Endothelial cell of umbilical vein (primary cell): ENCODE measurements at regions of chrX and their contacts with region 1.

Region 1: DNA sequence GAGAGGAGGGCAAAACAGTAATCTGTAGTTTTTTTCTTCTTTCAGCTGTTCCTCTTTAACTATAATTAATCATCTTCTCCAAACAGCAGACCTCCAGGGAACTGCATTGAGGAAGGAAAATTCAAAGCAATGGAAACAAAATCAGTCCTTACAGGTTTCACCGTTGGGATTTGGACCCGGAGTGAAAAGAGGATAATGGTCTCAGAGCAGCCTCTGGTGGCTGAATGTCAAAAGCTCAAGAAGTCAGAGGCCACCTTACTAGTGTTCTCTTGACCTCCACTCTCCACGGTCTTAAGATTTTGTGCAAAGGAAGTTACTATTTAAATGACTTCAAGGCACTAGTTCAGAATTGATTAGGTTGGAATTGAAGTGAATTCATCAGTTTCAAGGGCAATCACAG is 16.0 kb upstream of the MID1 start:
- DNase-seq: peak; percentile 73
- H3K4me3 ChIP-seq: no peak overlapping the region
- H3K27ac ChIP-seq: no peak overlapping the region
- H3K4me1 ChIP-seq: peaks cover 10% of the 10 kb centered on the region
- H3K27me3 ChIP-seq: no peaks in the 10 kb centered on the region
- CTCF ChIP-seq: peak; percentile 43 to 65
- POLR2A ChIP-seq: no peak

Region 2: GRCh38 chrX:10254741-10255140 is 381.6 kb before region 1 on chrX:
- CTCF ChIA-PET with region 1: interaction called, 6 read pairs
- POLR2A ChIA-PET with region 1: no interaction called
- dilution Hi-C with region 1: no loop called
- intact Hi-C with region 1: loop called (anchors 2 kb)
- DNase-seq: peak; percentile 3
- H3K4me3 ChIP-seq: no peak overlapping the region
- H3K27ac ChIP-seq: no peak overlapping the region
- H3K4me1 ChIP-seq: no peaks in the 10 kb centered on the region
- H3K27me3 ChIP-seq: no peaks in the 10 kb centered on the region
- CTCF ChIP-seq: no peak
- POLR2A ChIP-seq: no peak

Region 3: GRCh38 chrX:10444205-10444604 is 192.1 kb before region 1 on chrX:
- CTCF ChIA-PET with region 1: interaction called, 8 read pairs
- POLR2A ChIA-PET with region 1: no interaction called
- dilution Hi-C with region 1: no loop called
- intact Hi-C with region 1: loop called (anchors 1 kb)
- DNase-seq: peak; percentile 4
- H3K4me3 ChIP-seq: no peak overlapping the region
- H3K27ac ChIP-seq: no peak overlapping the region
- H3K4me1 ChIP-seq: peaks cover 2% of the 10 kb centered on the region
- H3K27me3 ChIP-seq: no peaks in the 10 kb centered on the region
- CTCF ChIP-seq: peak; percentile 11 to 17
- POLR2A ChIP-seq: no peak

Region 4: DNA sequence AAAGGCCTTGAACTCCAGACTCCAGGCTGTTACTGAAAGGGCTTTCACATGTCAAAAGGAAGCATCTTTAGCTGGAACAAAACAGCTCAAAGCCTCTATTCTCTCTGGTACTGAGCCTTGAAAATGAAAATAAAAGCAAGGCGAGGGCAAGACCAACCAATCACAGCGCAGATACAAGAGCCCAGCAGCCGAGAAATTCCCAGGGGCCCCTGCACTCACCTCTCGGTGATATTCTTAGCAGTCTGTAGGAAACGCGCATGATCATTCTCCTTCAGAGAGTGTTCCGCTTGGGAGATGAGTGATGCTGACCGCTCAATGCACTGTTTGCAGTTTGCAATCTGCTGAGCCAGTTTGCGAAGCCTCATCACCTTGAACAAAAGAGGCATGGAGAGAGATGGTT is 154.1 kb before region 1 on chrX:
- CTCF ChIA-PET with region 1: no interaction called
- POLR2A ChIA-PET with region 1: no interaction called
- dilution Hi-C with region 1: no loop called
- intact Hi-C with region 1: no loop called
- DNase-seq: peak; percentile 55
- H3K4me3 ChIP-seq: no peak overlapping the region
- H3K27ac ChIP-seq: peak overlapping the region; percentile 97
- H3K4me1 ChIP-seq: peaks cover 25% of the 10 kb centered on the region
- H3K27me3 ChIP-seq: no peaks in the 10 kb centered on the region
- CTCF ChIP-seq: no peak
- POLR2A ChIP-seq: no peak

Region 5: GRCh38 chrX:10597871-10598270 is 38.5 kb before region 1 on chrX:
- CTCF ChIA-PET with region 1: interaction called, 8 read pairs
- POLR2A ChIA-PET with region 1: no interaction called
- dilution Hi-C with region 1: no loop called
- intact Hi-C with region 1: loop called (anchors 1 kb)
- DNase-seq: peak; percentile 63
- H3K4me3 ChIP-seq: no peak overlapping the region
- H3K27ac ChIP-seq: no peak overlapping the region
- H3K4me1 ChIP-seq: no peaks in the 10 kb centered on the region
- H3K27me3 ChIP-seq: no peaks in the 10 kb centered on the region
- CTCF ChIP-seq: peak; percentile 46 to 63
- POLR2A ChIP-seq: no peak

Region 6: DNA sequence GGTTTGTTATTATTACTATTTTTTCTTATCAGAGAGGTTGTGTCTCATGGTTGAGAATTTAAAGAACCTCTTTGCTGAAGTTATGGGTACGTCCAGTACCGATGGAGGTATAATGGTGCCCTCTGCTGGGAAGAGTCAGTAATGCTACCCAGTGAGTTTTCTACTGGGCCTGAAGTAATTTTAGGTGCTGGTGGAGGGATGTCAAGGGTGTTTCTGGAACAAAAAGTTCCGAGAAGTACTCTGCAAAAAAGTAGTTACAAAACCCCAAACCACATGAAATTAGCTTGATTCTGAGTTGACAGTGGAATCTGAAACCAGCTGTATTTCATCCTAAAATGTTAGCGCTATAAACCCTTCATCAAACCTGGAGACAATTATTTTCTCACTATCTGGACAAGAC is 86.5 kb after region 1 on chrX:
- CTCF ChIA-PET with region 1: interaction called, 4 read pairs
- POLR2A ChIA-PET with region 1: no interaction called
- dilution Hi-C with region 1: no loop called
- intact Hi-C with region 1: loop called (anchors 1 kb)
- DNase-seq: peak; percentile 54
- H3K4me3 ChIP-seq: no peak overlapping the region
- H3K27ac ChIP-seq: no peak overlapping the region
- H3K4me1 ChIP-seq: peaks cover 2% of the 10 kb centered on the region
- H3K27me3 ChIP-seq: no peaks in the 10 kb centered on the region
- CTCF ChIP-seq: peak; percentile 49 to 55
- POLR2A ChIP-seq: no peak

Region 7: GRCh38 chrX:11100281-11101035 is 464.1 kb after region 1 on chrX:
- CTCF ChIA-PET with region 1: interaction called, 9 read pairs
- POLR2A ChIA-PET with region 1: no interaction called
- dilution Hi-C with region 1: no loop called
- intact Hi-C with region 1: loop called (anchors 1 kb)
- DNase-seq: peak; percentile 63
- H3K4me3 ChIP-seq: no peak overlapping the region
- H3K27ac ChIP-seq: peak overlapping the region; percentile 40
- H3K4me1 ChIP-seq: peaks cover 4% of the 10 kb centered on the region
- H3K27me3 ChIP-seq: no peaks in the 10 kb centered on the region
- CTCF ChIP-seq: peak; percentile 28 to 45
- POLR2A ChIP-seq: no peak